Activated naive CD4-positive, alpha-beta T cell treated with anti-CD3 and anti-CD28 coated beads for 36 hours (primary cell): ENCODE measurements at regions of chr17 and their contacts with region 1.

Region 1: GRCh38 chr17:42819944-42820535 is 4.0 kb downstream of the BECN1 start:
- DNase-seq: peak; percentile 82
- H3K4me3 Mint-ChIP-seq: no peak overlapping the region
- H3K27ac Mint-ChIP-seq: no peak overlapping the region
- H3K4me1 Mint-ChIP-seq: peaks cover 32% of the 10 kb centered on the region
- H3K27me3 Mint-ChIP-seq: no peaks in the 10 kb centered on the region

Region 2: DNA sequence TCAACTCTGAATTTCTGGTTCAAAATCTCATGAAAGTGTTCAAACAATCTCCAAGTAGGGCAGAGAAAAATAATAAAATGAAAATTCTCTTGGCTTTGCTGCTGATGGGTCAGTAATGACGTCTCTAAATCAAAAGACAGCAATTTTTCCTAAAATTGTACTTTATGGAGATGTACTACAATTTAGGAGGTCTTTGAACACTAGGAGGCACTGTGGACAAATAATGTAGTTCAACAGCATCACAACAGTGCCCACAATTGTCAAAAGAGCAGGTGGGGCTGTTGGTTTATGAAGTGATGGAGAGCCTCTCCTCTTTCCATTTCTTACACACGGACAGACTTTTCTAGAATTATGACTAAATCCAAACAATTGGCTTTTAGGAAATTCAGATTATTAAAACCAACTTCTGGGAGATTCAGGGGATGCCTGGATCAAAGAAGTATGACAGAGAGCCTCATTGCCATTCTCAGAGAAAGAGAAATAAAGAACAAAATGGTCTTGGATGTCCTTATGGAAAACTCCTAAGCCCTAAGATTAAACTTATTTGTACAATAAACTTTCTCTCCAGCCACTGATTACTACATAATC is 99.0 kb before region 1 on chr17:
- CTCF ChIA-PET with region 1: no interaction called
- intact Hi-C with region 1: loop called (anchors 1 kb)
- DNase-seq: peak; percentile 35
- H3K4me3 Mint-ChIP-seq: no peak overlapping the region
- H3K27ac Mint-ChIP-seq: no peak overlapping the region
- H3K4me1 Mint-ChIP-seq: no peaks in the 10 kb centered on the region
- H3K27me3 Mint-ChIP-seq: no peaks in the 10 kb centered on the region

Region 3: GRCh38 chr17:42744806-42745617 is 75.0 kb before region 1 on chr17 and contains the start of gene EZH1:
- CTCF ChIA-PET with region 1: interaction called, 3 read pairs
- intact Hi-C with region 1: loop called (anchors 1 kb)
- DNase-seq: peak; percentile 93
- H3K4me3 Mint-ChIP-seq: peak within 1 kb of the TSS; percentile 90
- H3K27ac Mint-ChIP-seq: peak within 1 kb of the TSS; percentile 93
- H3K4me1 Mint-ChIP-seq: peaks cover 21% of the 10 kb centered on the region
- H3K27me3 Mint-ChIP-seq: peaks cover 6% of the 10 kb centered on the region
- total RNA-seq, gene EZH1: 31.9 to 34.0 TPM

Region 4: GRCh38 chr17:42798383-42799380 is 21.4 kb before region 1 on chr17 and contains the starts of genes CNTD1 and COA3:
- CTCF ChIA-PET with region 1: interaction called, 4 read pairs
- intact Hi-C with region 1: loop called (anchors 1 kb)
- DNase-seq: peak; percentile 90
- H3K4me3 Mint-ChIP-seq: peak within 1 kb of the TSS; percentile 91
- H3K27ac Mint-ChIP-seq: peak within 1 kb of the TSS; percentile 62
- H3K4me1 Mint-ChIP-seq: peaks cover 21% of the 10 kb centered on the region
- H3K27me3 Mint-ChIP-seq: no peaks in the 10 kb centered on the region
- total RNA-seq, gene CNTD1: not detected
- total RNA-seq, gene COA3: 23.7 to 24.4 TPM

Region 5: GRCh38 chr17:42832974-42833766 is 13.1 kb after region 1 on chr17 and contains the start of gene PSME3:
- CTCF ChIA-PET with region 1: interaction called, 16 read pairs
- intact Hi-C with region 1: loop called (anchors 1 kb)
- DNase-seq: peak; percentile 92
- H3K4me3 Mint-ChIP-seq: peak within 1 kb of the TSS; percentile 95
- H3K27ac Mint-ChIP-seq: peak within 1 kb of the TSS; percentile 97
- H3K4me1 Mint-ChIP-seq: peaks cover 22% of the 10 kb centered on the region
- H3K27me3 Mint-ChIP-seq: no peaks in the 10 kb centered on the region
- total RNA-seq, gene PSME3: 84.7 to 87.0 TPM

Region 6: GRCh38 chr17:42980398-42981397 is 160.7 kb after region 1 on chr17 and contains the start of gene RUNDC1:
- CTCF ChIA-PET with region 1: no interaction called
- intact Hi-C with region 1: loop called (anchors 1 kb)
- DNase-seq: peak; percentile 90
- H3K4me3 Mint-ChIP-seq: peak within 1 kb of the TSS; percentile 99
- H3K27ac Mint-ChIP-seq: peak within 1 kb of the TSS; percentile 90
- H3K4me1 Mint-ChIP-seq: peaks cover 36% of the 10 kb centered on the region
- H3K27me3 Mint-ChIP-seq: no peaks in the 10 kb centered on the region
- total RNA-seq, gene RUNDC1: 5.9 to 6.5 TPM